Heart right ventricle (tissue), 16 donors: ENCODE measurements at regions of chr10 and their contacts with region 1.

Region 1: DNA sequence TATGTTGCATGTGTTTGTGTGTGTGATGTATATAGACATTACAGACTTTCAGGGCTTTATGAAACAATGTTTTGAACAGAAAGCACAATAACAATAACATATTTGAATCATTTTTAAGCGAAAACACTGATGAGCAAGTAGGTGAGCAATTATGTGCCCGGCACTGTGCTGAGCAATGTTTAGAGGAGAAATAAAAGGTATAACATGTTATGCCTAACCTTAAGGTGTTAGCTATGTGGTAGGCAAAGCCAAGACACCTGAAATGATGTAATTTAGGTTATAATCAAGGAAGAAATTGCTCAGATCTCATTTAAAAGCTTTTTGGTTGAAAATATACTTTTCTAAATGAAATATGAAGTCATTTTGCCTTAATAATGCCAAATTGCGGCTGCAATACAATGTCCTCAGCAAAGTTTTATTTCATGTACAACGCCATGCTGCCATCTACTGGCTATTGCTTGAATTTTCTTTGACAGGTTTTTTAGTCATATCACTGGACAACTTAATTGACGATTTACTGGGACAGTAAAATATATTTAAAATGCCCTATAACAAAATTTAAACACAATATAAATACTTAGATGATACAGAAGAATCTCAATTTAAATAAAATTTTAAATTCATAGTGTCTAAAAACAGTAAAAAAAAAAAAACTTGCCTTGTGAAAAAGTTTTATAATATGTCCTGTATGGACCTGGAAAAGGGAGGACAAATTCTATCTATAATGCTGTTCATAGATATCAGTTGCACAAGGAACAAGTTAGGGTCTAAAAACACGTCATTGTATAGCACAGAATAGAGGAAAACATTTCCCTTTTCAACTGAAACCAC is 131.1 kb upstream of the CDK1 start:
- DNase-seq: peak in 1 of 2 donors; percentile 39
- ATAC-seq: peak in 2 of 8 donors; percentile 42 to 64
- H3K4me3 ChIP-seq: no peak overlapping the region
- H3K27ac ChIP-seq: no peak overlapping the region
- H3K4me1 ChIP-seq: peaks cover 0 to 5% (median 0%) of the 10 kb centered on the region in 9 donors
- H3K27me3 ChIP-seq: no peaks in the 10 kb centered on the region
- CTCF ChIP-seq: peak; percentile 59 to 88 (median 76)

Region 2: GRCh38 chr10:60099998-60100747 is 547.0 kb before region 1 on chr10:
- intact Hi-C with region 1: loop called in 7 of 10 experiments (anchors 5 to 10 kb)
- DNase-seq: peak in 1 of 2 donors; percentile 9
- ATAC-seq: peak in 7 of 8 donors; percentile 25 to 75 (median 56)
- H3K4me3 ChIP-seq: no peak overlapping the region
- H3K27ac ChIP-seq: no peak overlapping the region
- H3K4me1 ChIP-seq: peaks cover 0 to 4% (median 0%) of the 10 kb centered on the region in 9 donors
- H3K27me3 ChIP-seq: no peaks in the 10 kb centered on the region
- CTCF ChIP-seq: peak in 8 of 9 donors; percentile 36 to 72 (median 64)

Region 3: GRCh38 chr10:60444494-60445064 is 202.6 kb before region 1 on chr10:
- intact Hi-C with region 1: loop called (anchors 1 to 5 kb)
- DNase-seq: no peak
- ATAC-seq: no peak
- H3K4me3 ChIP-seq: no peak overlapping the region
- H3K27ac ChIP-seq: no peak overlapping the region
- H3K4me1 ChIP-seq: peaks cover 0 to 20% (median 10%) of the 10 kb centered on the region in 9 donors
- H3K27me3 ChIP-seq: no peaks in the 10 kb centered on the region
- CTCF ChIP-seq: peak in 8 of 9 donors; percentile 40 to 76 (median 65)

Region 4: GRCh38 chr10:60549686-60550085 is 97.5 kb before region 1 on chr10:
- intact Hi-C with region 1: loop called in 4 of 10 experiments (anchors 10 kb)
- DNase-seq: no peak
- ATAC-seq: no peak
- H3K4me3 ChIP-seq: no peak overlapping the region
- H3K27ac ChIP-seq: no peak overlapping the region
- H3K4me1 ChIP-seq: no peaks in the 10 kb centered on the region
- H3K27me3 ChIP-seq: no peaks in the 10 kb centered on the region
- CTCF ChIP-seq: peak in 7 of 9 donors; percentile 9 to 51 (median 25)

Region 5: DNA sequence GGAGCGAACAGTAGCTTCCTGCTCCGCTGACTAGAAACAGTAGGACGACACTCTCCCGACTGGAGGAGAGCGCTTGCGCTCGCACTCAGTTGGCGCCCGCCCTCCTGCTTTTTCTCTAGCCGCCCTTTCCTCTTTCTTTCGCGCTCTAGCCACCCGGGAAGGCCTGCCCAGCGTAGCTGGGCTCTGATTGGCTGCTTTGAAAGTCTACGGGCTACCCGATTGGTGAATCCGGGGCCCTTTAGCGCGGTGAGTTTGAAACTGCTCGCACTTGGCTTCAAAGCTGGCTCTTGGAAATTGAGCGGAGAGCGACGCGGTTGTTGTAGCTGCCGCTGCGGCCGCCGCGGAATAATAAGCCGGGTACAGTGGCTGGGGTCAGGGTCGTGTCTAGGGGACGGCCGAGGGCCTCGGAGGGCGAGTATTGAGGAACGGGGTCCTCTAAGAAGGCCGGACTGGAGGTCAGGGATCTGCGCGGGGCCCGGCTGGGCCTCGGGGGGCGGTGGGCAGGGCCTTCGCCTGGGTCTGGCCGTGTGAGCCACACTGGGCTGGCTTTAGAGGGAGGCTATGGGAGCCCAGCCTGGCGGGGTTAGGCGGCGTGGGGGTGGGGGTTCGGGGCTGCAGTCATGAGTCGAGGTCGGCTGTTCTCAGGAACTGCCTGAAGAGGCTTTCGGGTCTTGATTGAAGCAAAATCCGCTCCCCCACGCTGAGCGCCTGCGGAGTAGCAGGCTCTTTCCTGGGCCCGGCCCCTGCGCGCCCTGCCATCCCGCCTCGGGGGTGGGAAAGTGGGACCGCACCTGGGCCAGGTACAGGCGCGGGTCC is 131.2 kb after region 1 on chr10 and contains the start of gene CDK1:
- intact Hi-C with region 1: no loop called
- DNase-seq: peak; percentile 95 to 98
- ATAC-seq: peak; percentile 99 to 100 (median 100)
- H3K4me3 ChIP-seq: peak within 1 kb of the TSS; percentile 42 to 75 (median 64)
- H3K27ac ChIP-seq: peak within 1 kb of the TSS in 5 of 10 donors; percentile 4 to 82 (median 42)
- H3K4me1 ChIP-seq: peaks cover 3 to 36% (median 8%) of the 10 kb centered on the region in 9 donors
- H3K27me3 ChIP-seq: peaks cover 0 to 8% (median 0%) of the 10 kb centered on the region in 7 donors
- CTCF ChIP-seq: peak in 2 of 9 donors; percentile 4 to 16
- total RNA-seq, gene CDK1: 0.27 to 8.6 (median 1.0) TPM